Sigmoid colon (tissue), 7 donors: ENCODE measurements at regions of chr17 and their contacts with region 1.

Region 1: GRCh38 chr17:35063514-35064223 is at the start of gene RFFL:
- DNase-seq: peak; percentile 95
- H3K4me3 ChIP-seq: peak within 1 kb of the TSS in 3 of 4 donors; percentile 16 to 29 (median 26)
- H3K27ac ChIP-seq: peak within 1 kb of the TSS; percentile 79 to 88 (median 84)
- H3K4me1 ChIP-seq: peaks cover 0 to 20% (median 17%) of the 10 kb centered on the region in 4 donors
- H3K27me3 ChIP-seq: no peaks in the 10 kb centered on the region
- CTCF ChIP-seq: peak in 2 of 4 experiments; percentile 11 to 19
- EP300 ChIP-seq: no peak
- POLR2A ChIP-seq: peak in 1 of 2 donors; percentile 22
- total RNA-seq, gene RFFL: 16.5 to 25.2 (median 21.8) TPM

Region 2: GRCh38 chr17:34998205-34998604 is 65.5 kb before region 1 on chr17:
- intact Hi-C with region 1: loop called (anchors 2 kb)
- DNase-seq: peak; percentile 89
- H3K4me3 ChIP-seq: peak overlapping the region in 2 of 4 donors; percentile 4 to 13
- H3K27ac ChIP-seq: peak overlapping the region; percentile 86 to 92 (median 89)
- H3K4me1 ChIP-seq: peaks cover 0 to 69% (median 57%) of the 10 kb centered on the region in 4 donors
- H3K27me3 ChIP-seq: no peaks in the 10 kb centered on the region
- CTCF ChIP-seq: peak; percentile 74 to 87 (median 79)
- EP300 ChIP-seq: no peak
- POLR2A ChIP-seq: no peak